GM10248 (cell line): ENCODE measurements at regions of chr17 and their contacts with region 1.

Region 1: DNA sequence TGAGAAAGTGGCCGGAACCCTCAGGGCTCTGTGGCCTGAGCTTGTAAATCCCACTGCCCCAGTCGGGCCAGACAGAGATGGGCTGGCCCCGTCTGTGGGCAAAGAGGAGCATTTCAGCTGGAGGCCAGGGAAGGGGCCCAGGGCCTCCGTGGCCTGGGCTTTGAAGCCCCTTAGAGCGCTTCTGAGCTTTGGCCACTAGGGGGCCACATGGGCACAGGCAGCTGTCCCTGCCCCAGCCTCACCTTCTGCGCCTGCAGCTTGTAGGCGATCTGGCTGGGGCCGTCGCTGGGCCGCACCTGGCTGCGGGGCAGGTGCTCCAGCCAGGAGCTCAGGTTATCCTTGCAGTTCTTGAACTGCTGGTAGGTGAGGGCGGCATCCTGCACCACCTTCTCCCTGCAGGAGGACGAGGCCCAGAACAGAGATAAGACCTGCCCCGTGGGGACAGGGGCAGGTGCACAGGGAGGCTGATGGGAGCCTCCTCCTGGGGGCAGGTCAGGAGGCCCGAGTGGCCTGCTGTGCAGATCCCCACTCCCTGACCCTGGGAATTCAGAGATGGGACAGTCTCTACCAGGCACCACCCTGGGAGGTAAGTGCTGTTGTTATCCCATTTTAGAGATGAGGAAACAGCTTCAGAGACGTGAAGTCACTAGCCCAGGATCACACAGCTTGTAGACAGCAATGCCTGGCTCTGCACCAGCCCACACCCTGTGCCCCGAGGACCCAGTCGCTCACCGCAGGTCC is 12.8 kb downstream of the EVPL start:
- DNase-seq: peak; percentile 93
- CTCF ChIP-seq: peak; percentile 99

Region 2: DNA sequence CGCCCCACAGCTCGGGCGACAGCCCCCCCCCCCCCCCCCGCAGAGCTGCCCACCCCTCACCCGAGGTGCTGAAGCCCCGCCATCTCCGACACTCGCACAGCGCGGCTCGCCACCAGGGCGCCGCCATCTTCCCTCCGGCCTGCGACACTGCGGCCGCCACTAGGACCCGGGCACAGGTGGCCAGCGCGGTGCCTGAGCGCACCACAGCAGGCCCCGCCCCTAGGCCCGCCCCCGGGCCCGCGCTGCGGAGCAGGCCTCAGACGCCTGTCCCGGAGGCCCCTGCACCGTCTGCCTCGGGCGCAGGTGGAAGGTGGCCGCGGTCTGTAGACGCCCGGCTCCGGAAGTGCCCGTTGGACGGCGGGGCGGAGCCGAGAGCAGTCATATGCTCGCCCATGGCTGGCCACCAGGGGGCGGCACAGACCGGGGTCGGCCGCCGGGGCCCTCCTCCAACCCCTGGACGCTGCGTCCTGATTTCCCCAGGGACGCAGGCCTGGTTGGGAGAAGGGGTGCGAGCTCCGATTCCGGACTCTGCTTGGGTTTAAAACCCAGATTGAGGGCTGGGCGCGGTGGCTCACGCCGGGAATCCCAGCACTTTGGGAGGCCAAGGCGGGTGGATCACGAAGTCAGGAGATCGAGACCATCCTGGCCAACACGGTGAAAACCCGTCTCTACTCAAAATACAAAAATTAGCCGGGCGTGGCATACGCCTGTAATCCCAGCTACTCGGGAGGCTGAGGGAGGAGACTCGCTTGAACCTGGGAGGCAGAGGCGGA is 109.4 kb before region 1 on chr17 and contains the start of gene MRPL38:
- CTCF ChIA-PET with region 1: interaction called, 239 read pairs
- POLR2A ChIA-PET with region 1: no interaction called
- DNase-seq: peak; percentile 99
- CTCF ChIP-seq: peak; percentile 87

Region 3: GRCh38 chr17:76027159-76027839 is 12.9 kb after region 1 on chr17 and contains the start of gene EVPL:
- CTCF ChIA-PET with region 1: interaction called, 24 read pairs
- POLR2A ChIA-PET with region 1: no interaction called
- DNase-seq: no peak
- CTCF ChIP-seq: no peak

Region 4: DNA sequence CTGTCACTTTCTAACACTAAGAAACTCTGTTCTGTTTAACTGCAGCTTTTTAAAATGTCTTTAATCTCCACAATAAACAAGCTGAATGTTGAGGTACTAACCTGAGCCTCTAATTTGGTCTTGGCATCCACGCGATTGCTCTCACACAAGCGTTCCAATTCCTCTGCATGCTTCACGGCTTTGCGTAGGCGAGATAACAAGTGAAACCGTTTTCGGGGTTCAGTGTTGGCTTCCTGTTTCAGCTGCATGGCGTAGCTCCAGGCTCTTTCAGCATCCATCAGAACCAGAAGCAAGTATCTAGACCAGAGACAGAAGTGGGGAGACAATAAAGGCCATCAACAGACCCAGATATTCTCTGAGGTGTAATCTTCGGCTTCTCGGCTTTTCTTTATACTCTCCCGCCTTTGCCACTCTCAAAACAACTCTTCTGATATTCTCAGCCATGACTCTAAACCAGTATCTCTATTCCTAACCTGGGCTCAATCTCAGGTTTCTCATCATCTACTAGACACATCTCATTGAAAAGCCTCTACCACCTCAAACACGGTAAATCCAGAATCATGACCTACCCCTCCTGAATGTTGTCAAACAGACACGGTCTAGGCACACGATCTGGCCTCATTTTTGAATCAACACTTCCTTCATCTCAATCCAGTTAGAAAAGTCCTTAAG is 49.7 kb after region 1 on chr17:
- CTCF ChIA-PET with region 1: interaction called, 20 read pairs
- POLR2A ChIA-PET with region 1: no interaction called
- DNase-seq: no peak
- CTCF ChIP-seq: no peak

Region 5: DNA sequence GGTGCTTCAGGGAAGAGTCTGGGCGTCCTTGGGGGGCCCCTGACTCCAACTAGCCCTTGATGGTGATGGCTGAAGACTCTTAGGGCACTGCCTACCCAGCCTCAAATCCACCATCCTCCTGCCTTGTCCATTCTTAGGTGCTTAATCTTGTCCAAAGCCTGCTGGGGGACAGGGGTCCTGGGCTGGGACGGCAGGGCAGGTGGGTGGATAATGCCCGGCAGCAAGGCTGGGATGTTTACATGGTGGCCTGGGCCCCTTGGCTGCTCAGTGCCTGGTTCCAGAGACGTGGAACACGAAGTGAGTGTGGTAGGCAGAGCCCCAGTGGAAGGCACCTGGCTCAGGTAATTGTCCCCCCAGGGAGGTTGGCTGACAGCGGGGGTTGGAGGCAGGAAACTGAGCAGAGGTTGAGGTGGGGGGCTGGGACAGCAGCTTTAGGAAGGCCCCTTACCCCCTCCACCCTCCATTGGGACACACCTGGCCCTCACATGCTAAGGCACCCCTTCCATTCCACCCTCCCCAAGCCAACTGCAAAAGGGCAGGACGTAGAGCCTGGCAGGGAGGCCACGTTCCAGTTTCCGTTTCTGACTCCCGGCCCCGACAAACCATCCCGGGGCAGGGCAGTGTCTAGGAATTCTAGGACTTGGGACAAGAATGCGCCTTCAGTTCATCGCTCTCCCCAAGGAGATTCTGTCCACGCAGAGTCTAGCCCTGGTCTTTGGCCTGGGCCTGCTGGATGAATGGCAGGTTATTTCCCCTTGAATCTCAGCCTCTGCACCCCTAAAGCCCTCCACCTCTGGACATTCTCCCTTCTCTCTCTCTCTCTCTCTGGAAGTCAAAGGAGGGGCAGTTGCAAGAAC is 124.8 kb after region 1 on chr17:
- CTCF ChIA-PET with region 1: no interaction called
- POLR2A ChIA-PET with region 1: no interaction called
- DNase-seq: no peak
- CTCF ChIP-seq: no peak

Region 6: DNA sequence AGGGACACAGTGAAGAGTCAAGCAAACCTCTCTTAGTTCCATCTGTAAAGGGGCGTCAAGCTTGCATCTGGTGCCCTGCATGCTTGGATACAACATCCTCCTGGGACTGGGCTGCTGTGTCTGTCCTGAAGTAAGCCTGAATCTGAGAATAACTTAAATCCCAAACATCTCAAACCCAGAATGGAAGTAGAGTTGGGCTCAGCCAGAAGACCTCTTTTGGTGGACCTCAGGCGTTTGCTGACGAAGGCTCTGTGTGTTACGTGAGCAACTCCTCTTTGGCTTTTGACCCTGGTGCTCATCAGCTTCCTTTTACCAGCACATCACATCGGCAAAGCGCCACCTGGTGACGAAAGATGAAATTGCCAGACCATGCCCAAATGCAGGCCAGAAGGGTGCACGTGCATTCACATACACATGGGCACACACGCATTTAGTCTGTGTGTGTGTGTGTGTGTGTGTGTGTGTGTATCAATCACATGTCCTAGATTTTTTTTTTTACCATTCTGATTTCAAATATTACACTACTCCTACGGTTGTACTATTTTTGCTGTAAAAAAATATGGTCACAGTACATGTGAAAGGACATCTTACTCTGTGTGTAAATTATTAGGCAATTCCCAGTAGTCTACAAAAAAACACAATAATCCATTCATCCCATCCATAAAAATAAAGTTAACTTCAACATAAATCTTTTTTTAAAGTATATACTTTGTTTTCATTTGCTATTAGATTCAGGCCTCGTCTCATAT is 167.8 kb after region 1 on chr17:
- CTCF ChIA-PET with region 1: interaction called, 17 read pairs
- POLR2A ChIA-PET with region 1: no interaction called
- DNase-seq: peak; percentile 83
- CTCF ChIP-seq: peak; percentile 91

Region 7: GRCh38 chr17:76307299-76307965 is 293.1 kb after region 1 on chr17:
- CTCF ChIA-PET with region 1: interaction called, 21 read pairs
- POLR2A ChIA-PET with region 1: no interaction called
- DNase-seq: no peak
- CTCF ChIP-seq: no peak